ENCODE measurements at regions of chr2 and their contacts with region 1.

Region 1: GRCh38 chr2:46909771-46910419 is 5.7 kb downstream of the MCFD2 start:
- DNase-seq: peak; percentile 55 to 84
- ATAC-seq: peak; percentile 82 to 93
- H3K4me3 ChIP-seq: no peak overlapping the region
- H3K27ac ChIP-seq: peak overlapping the region; percentile 87 to 100 (median 99)
- H3K4me1 ChIP-seq: peaks cover 50 to 53% of the 10 kb centered on the region in 2 donors
- H3K27me3 ChIP-seq: no peaks in the 10 kb centered on the region
- CTCF ChIP-seq: no peak
- POLR2A ChIP-seq: no peak

Region 2: GRCh38 chr2:47039913-47040562 is 130.1 kb after region 1 on chr2:
- in situ Hi-C with region 1: no loop called
- intact Hi-C with region 1: no loop called
- DNase-seq: no peak
- ATAC-seq: no peak
- H3K4me3 ChIP-seq: no peak overlapping the region
- H3K27ac ChIP-seq: peak overlapping the region; percentile 86 to 93 (median 92)
- H3K4me1 ChIP-seq: peaks cover 75 to 78% of the 10 kb centered on the region in 2 donors
- H3K27me3 ChIP-seq: no peaks in the 10 kb centered on the region
- CTCF ChIP-seq: no peak
- POLR2A ChIP-seq: no peak

Region 3: DNA sequence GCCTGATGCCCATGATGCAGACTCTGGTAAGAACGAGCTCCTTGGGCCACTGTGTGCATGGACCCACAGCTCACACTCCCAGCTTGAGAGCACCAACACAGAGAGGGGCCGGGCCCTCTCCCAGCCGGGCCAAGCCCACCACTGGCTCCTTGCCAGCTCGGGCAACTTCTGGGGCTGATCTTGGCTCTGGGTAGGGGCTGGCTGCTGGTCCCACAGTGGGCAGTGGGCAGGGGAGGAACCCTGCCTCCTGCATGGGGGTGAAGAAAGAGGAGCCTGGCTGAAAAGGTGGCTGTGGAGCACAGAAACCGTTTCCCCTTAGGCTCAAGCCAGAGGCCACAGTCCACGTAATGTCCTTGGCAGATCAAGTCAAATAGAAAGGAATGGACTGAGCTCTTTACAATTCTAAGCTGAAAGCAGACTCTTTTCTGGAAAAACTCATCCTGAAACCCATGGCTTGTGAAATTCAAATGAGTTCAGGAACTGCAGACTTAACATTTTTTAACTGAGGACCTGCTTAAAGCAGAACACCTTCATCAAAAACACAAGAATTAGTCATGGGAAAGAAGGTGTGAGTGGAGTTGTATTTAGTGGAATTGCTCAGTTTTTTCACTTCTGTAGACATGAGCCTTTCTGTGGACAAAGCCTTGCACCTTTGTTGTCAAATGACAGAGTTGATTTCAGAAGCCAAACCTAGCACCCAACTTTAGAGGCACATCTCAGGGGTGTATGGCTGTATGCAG is 140.3 kb after region 1 on chr2:
- in situ Hi-C with region 1: no loop called
- intact Hi-C with region 1: loop called (anchors 5 kb)
- DNase-seq: no peak
- ATAC-seq: no peak
- H3K4me3 ChIP-seq: no peak overlapping the region
- H3K27ac ChIP-seq: peak overlapping the region; percentile 84 to 93 (median 89)
- H3K4me1 ChIP-seq: peaks cover 68 to 74% of the 10 kb centered on the region in 2 donors
- H3K27me3 ChIP-seq: no peaks in the 10 kb centered on the region
- CTCF ChIP-seq: no peak
- POLR2A ChIP-seq: no peak

Measured in gastrocnemius medialis (tissue), 4 donors.